Gastrocnemius medialis (tissue), 4 donors: ENCODE measurements at regions of chr1 and their contacts with region 1.

Region 1: DNA sequence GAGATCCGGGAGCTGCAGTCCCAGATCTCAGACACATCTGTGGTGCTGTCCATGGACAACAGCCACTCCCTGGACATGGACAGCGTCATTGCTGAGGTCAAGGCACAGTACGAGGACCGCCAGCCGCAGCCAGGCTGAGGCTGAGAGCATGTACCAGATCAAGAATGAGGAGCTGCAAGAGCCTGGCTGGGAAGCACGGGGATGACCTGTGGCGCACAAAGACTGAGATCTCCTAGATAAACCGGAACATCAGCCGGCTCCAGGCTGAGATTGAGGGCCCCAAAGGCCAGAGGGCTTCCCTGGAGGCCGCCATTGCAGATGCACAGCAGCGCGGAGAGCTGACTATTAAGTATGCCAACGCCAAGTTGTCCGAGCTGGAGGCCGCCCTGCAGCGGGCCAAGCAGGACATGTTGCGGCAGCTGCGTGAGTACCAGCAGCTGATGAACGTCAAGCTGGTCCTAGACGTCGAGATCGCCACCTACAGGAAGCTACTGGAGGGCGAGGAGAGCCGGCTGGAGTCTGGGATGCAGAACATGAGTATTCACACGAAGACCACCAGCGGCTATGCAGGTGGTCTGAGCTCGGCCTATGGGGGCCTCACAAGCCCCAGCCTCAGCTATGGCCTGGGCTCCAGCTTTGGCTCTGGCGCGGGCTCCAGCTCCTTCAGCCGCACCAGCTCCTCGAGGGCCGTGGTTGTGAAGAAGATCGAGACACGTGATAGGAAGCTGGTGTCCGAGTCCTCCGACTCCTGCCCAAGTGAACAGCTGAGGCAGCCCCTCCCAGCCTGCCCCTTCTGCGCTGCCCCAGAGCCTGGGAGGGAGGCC is 25.5 kb downstream of the ETV3L start:
- DNase-seq: peak; percentile 60 to 69
- ATAC-seq: peak; percentile 80 to 82
- H3K4me3 ChIP-seq: peak overlapping the region in 3 of 4 donors; percentile 12 to 43 (median 33)
- H3K27ac ChIP-seq: no peak overlapping the region
- H3K4me1 ChIP-seq: peaks cover 2 to 3% of the 10 kb centered on the region in 2 donors
- H3K27me3 ChIP-seq: peaks cover 0 to 3% (median 0%) of the 10 kb centered on the region in 3 donors
- CTCF ChIP-seq: peak; percentile 46 to 83 (median 55)
- POLR2A ChIP-seq: no peak

Region 2: DNA sequence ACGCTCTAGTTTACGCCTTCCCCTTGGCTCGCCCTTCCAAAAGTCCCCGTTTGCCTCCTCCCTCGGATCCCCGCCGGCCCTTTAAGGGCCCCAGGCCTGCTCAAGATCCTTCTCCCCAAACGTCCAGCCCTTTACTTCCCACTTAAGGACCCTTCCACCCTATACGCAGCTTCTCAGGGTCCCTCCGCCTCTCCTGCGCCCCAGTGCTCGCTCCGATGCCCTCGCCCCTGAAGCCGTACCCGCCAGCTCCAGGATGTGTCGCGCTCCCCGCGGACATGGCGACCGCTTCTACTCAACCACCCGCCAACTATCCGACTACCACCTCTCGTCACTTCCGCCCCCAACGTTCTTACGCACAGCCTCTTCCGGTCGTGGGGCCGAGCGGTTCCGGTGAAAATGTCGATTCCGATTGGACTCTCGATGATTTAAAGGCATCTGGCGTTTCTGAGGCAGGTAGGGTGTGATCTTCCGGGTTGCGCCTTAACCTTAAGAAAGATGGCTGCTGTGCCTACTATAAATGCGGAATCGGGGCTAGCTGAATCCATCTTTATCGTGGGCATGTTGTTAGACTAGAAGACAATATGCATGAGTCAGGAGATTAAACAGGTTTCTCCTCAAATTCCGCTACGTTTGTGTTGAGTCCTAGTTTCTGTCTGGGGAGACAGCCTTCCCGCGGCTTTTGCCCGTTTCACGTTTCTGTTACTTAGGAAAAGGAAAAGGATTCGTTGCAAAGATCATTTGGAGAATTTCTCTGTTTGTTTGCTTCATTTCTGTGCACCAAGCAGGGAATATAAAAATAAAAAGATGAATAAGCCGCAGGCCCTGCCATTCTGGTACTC is 1139.8 kb before region 1 on chr1 and contains the start of gene KHDC4:
- in situ Hi-C with region 1: no loop called
- intact Hi-C with region 1: no loop called
- DNase-seq: peak; percentile 95 to 96
- ATAC-seq: peak; percentile 99 to 100
- H3K4me3 ChIP-seq: peak within 1 kb of the TSS; percentile 85 to 96 (median 90)
- H3K27ac ChIP-seq: peak within 1 kb of the TSS; percentile 93 to 95 (median 94)
- H3K4me1 ChIP-seq: peaks cover 47 to 51% of the 10 kb centered on the region in 2 donors
- H3K27me3 ChIP-seq: no peaks in the 10 kb centered on the region
- CTCF ChIP-seq: peak in 3 of 5 experiments; percentile 24 to 36 (median 26)
- POLR2A ChIP-seq: peak; percentile 91 to 96
- total RNA-seq, gene KHDC4: 18.2 to 46.3 (median 26.3) TPM

Region 3: DNA sequence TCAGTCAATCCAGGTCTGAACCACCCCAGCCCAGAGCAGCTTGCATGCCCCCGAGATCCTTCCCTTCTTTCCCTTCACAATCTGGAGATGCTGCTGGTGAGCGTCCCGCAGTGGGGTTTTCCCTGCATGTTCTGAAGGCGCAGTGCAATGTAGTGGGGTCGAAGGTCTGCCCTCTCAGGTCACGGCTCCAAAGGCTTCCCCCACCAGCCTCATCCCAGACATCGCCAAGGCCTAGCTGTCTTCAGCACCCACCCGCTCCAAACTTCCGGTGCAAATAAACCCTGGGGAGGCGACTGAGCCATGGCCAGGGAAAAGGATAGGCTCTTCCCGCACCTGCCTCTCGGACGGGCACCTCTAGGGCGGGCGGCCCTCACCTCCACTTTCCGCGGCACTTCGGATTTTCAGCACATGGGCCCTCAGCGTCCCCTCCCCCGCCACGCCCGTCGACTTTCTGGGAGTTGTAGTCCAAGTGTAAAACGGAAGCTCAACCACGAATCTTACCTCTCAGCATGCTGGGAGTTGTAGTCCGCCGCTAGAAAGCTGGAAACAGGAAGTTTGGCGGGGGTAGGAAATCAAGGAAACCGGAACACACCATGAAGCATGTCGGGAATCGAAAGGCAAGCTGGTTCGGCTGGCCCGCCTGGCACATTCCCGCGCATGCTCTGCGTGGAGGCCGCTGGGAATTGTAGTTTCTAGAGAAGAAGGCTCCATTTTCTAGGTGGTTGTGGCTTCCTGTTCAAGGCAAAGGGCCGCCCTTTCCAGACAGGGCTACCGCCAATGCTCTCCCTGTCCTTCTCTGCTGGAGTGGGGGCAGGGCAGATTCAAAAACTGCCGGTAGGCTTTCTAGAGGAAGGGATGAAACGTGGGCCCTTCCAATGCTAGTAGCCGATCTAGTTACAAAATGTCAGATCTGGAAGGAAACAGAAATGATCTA is 333.2 kb before region 1 on chr1 and contains the start of gene MRPL24:
- in situ Hi-C with region 1: no loop called
- intact Hi-C with region 1: no loop called
- DNase-seq: peak; percentile 99
- ATAC-seq: peak; percentile 97 to 98
- H3K4me3 ChIP-seq: peak within 1 kb of the TSS; percentile 73 to 94 (median 76)
- H3K27ac ChIP-seq: peak within 1 kb of the TSS; percentile 87 to 99 (median 92)
- H3K4me1 ChIP-seq: peaks cover 27 to 29% of the 10 kb centered on the region in 2 donors
- H3K27me3 ChIP-seq: no peaks in the 10 kb centered on the region
- CTCF ChIP-seq: peak in 1 of 5 experiments; percentile 8
- POLR2A ChIP-seq: peak; percentile 14 to 36
- total RNA-seq, gene MRPL24: 54.9 to 121 (median 102) TPM

Region 4: GRCh38 chr1:156910309-156910782 is 163.8 kb before region 1 on chr1:
- in situ Hi-C with region 1: no loop called
- intact Hi-C with region 1: loop called (anchors 10 kb)
- DNase-seq: no peak
- ATAC-seq: peak in 1 of 2 donors; percentile 63
- H3K4me3 ChIP-seq: no peak overlapping the region
- H3K27ac ChIP-seq: no peak overlapping the region
- H3K4me1 ChIP-seq: no peaks in the 10 kb centered on the region
- H3K27me3 ChIP-seq: peaks cover 0 to 11% (median 7%) of the 10 kb centered on the region in 3 donors
- CTCF ChIP-seq: peak; percentile 49 to 88 (median 71)
- POLR2A ChIP-seq: no peak

Region 5: GRCh38 chr1:156959414-156959813 is 114.7 kb before region 1 on chr1:
- in situ Hi-C with region 1: no loop called
- intact Hi-C with region 1: loop called (anchors 10 kb)
- DNase-seq: peak; percentile 44 to 56
- ATAC-seq: peak; percentile 88 to 95
- H3K4me3 ChIP-seq: no peak overlapping the region
- H3K27ac ChIP-seq: peak overlapping the region; percentile 27 to 70 (median 58)
- H3K4me1 ChIP-seq: peaks cover 0 to 20% of the 10 kb centered on the region in 2 donors
- H3K27me3 ChIP-seq: no peaks in the 10 kb centered on the region
- CTCF ChIP-seq: no peak
- POLR2A ChIP-seq: no peak

Region 6: GRCh38 chr1:156980551-156980950 is 93.6 kb before region 1 on chr1:
- in situ Hi-C with region 1: no loop called
- intact Hi-C with region 1: no loop called
- DNase-seq: no peak
- ATAC-seq: no peak
- H3K4me3 ChIP-seq: no peak overlapping the region
- H3K27ac ChIP-seq: no peak overlapping the region
- H3K4me1 ChIP-seq: no peaks in the 10 kb centered on the region
- H3K27me3 ChIP-seq: no peaks in the 10 kb centered on the region
- CTCF ChIP-seq: no peak
- POLR2A ChIP-seq: no peak

Region 7: DNA sequence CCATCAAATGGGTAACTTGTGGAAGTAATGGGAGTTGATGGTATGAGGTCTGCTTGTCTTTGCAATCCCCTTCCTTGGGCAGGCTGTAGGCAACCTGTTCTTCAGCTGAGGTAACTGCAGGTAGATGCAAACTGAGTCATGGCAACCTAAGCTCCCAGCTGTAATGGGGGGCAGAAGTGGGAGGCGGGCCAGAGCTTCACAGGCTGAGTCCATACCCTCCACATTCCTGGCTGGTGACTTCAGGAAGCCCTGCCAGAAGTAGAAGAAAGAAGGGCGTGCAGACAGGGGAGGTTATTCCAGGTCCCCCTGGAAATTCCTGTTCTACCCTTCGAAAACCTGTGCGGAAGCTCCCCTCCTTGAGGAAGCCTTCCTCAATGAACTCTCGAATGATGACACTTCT is 73.5 kb before region 1 on chr1:
- in situ Hi-C with region 1: no loop called
- intact Hi-C with region 1: loop called (anchors 10 kb)
- DNase-seq: no peak
- ATAC-seq: no peak
- H3K4me3 ChIP-seq: no peak overlapping the region
- H3K27ac ChIP-seq: no peak overlapping the region
- H3K4me1 ChIP-seq: peaks cover 4 to 8% of the 10 kb centered on the region in 2 donors
- H3K27me3 ChIP-seq: no peaks in the 10 kb centered on the region
- CTCF ChIP-seq: no peak
- POLR2A ChIP-seq: no peak

Region 8: DNA sequence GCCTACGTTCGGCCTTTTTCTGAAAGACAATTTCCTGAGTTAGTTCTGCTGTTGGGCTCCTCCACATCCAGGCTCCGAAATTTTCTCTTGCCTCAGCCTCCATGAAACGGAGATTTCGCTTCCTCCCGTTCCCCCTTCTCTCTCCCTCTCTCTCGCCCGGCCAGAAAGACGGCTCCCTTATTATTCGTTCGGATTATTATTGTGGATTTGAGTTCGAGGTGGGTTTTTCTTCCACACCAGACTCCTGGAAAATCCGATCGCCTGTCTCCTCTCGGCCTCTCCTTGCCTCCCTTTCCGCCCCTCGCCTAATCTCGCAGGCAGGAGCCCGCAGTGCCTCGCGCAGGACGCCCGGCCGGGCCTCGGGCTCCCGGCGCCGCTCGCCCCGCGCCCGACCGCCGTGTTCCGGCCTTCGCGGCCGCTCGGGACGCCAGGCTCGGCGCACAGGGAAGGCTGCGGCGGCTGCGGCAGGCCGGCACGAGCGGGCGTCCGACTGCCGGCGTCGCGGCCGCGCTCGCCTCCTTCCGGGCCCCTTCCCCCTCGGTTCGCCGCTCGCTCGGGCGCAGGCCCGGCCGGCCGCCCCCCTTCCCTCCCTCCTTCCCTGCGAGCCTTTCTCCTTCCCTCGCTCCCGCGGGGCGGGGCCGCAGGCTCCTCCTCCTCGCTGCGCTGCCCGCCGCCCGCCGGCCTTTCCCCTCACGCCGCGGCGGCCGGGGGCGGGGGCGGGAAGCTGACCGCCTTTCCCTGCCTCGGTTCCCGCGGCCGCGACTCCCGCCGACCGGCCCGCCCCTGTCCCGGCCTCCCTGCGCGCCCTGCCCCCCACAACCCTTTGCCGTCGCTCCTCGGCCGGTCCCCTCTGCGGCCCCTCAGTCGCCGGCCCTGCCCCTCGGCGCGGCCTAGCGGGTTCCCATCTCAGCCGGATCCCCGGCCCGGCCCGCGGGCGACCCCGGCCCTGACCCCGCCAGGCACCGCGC is 28.6 kb before region 1 on chr1 and contains the start of gene ARHGEF11:
- in situ Hi-C with region 1: no loop called
- intact Hi-C with region 1: loop called (anchors 2 kb)
- DNase-seq: peak; percentile 85 to 91
- ATAC-seq: peak; percentile 93 to 94
- H3K4me3 ChIP-seq: peak within 1 kb of the TSS; percentile 62 to 68 (median 66)
- H3K27ac ChIP-seq: peak within 1 kb of the TSS; percentile 84 to 89 (median 88)
- H3K4me1 ChIP-seq: peaks cover 38 to 40% of the 10 kb centered on the region in 2 donors
- H3K27me3 ChIP-seq: no peaks in the 10 kb centered on the region
- CTCF ChIP-seq: no peak
- POLR2A ChIP-seq: peak; percentile 80 to 83
- total RNA-seq, gene ARHGEF11: 19.5 to 33.4 (median 27.7) TPM

Region 9: GRCh38 chr1:157156058-157156541 is 81.9 kb after region 1 on chr1:
- in situ Hi-C with region 1: no loop called
- intact Hi-C with region 1: no loop called
- DNase-seq: peak; percentile 24 to 47
- ATAC-seq: peak; percentile 56 to 74
- H3K4me3 ChIP-seq: peak overlapping the region in 3 of 4 donors; percentile 28 to 46 (median 29)
- H3K27ac ChIP-seq: peak overlapping the region in 1 of 4 donors; percentile 9
- H3K4me1 ChIP-seq: peaks cover 0 to 4% of the 10 kb centered on the region in 2 donors
- H3K27me3 ChIP-seq: no peaks in the 10 kb centered on the region
- CTCF ChIP-seq: peak; percentile 91 to 98 (median 96)
- POLR2A ChIP-seq: no peak